ENCODE measurements at regions of chr18 and their contacts with region 1.

Region 1: GRCh38 chr18:50819728-50820378 is at the start of gene MRO:
- DNase-seq: peak; percentile 62 to 91
- H3K4me3 ChIP-seq: peak within 1 kb of the TSS in 3 of 4 experiments; percentile 24 to 54 (median 41); a peak in 5 of 8 replicates
- H3K27ac ChIP-seq: no peak within 1 kb of the TSS
- H3K4me1 ChIP-seq: peaks cover 3 to 12% (median 7%) of the 10 kb centered on the region in 4 experiments; a peak in 6 of 7 replicates
- H3K27me3 ChIP-seq: no peaks in the 10 kb centered on the region
- CTCF ChIP-seq: peak; percentile 89 to 93 (median 90)
- EP300 ChIP-seq: no peak
- POLR2A ChIP-seq: no peak
- RAD21 ChIP-seq: peak; percentile 99
- total RNA-seq, gene MRO: 0.67 and 1.0 TPM in 2 replicates

Region 2: DNA sequence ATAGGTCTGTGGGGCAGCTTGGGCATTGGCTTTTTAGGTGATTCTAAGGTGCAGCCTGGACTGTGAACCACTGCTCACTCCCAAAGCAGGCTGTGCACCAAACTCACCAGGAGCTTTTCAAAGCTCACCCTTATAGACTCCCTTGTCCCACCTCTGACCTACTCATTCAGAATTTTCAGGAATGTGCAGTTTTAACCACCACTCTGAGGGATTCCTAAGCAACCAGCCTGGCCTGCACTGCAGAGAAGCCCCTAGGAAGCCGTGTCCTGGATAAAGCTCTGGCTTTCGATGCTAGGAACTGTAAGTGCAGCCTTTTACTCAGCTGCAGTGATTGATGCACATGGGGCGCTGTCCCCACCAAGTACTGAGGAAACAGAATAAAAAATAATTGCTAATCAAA is 33.0 kb before region 1 on chr18:
- CTCF ChIA-PET with region 1: interaction called, 16 read pairs
- POLR2A ChIA-PET with region 1: no interaction called
- DNase-seq: no peak
- H3K4me3 ChIP-seq: no peak overlapping the region
- H3K27ac ChIP-seq: no peak overlapping the region
- H3K4me1 ChIP-seq: peaks cover 0 to 3% (median 0%) of the 10 kb centered on the region in 4 experiments; a peak in 1 of 7 replicates
- H3K27me3 ChIP-seq: no peaks in the 10 kb centered on the region
- CTCF ChIP-seq: no peak
- EP300 ChIP-seq: no peak
- POLR2A ChIP-seq: no peak
- RAD21 ChIP-seq: no peak

Region 3: DNA sequence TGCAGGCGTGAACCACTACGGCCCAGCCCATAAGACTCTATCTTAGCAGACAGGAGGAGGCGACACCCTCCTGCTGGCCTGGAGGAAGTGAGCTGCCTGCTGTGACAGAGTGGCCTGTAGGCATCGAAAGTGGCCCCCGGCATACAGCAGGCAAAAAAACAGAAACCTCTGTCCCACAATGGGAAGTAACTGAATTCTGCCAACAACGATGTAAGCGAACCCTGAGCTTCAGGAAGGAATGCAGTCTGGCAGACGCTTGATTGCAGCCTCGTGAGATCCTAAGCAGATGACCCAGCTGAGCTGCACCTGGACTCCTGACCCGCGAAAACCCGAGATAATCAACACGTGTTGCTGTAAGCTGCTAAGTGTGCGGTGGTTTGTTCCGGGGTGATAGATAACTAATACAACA is 13.6 kb before region 1 on chr18:
- CTCF ChIA-PET with region 1: interaction called, 11 read pairs
- POLR2A ChIA-PET with region 1: no interaction called
- DNase-seq: no peak
- H3K4me3 ChIP-seq: no peak overlapping the region
- H3K27ac ChIP-seq: no peak overlapping the region
- H3K4me1 ChIP-seq: peaks cover 0 to 3% (median under 1%) of the 10 kb centered on the region in 4 experiments; a peak in 3 of 7 replicates
- H3K27me3 ChIP-seq: no peaks in the 10 kb centered on the region
- CTCF ChIP-seq: no peak
- EP300 ChIP-seq: no peak
- POLR2A ChIP-seq: no peak
- RAD21 ChIP-seq: 0 out of 4 replicates have a peak, but pooled peaks of 1 of the 2 experiments have one; percentile 12

Region 4: DNA sequence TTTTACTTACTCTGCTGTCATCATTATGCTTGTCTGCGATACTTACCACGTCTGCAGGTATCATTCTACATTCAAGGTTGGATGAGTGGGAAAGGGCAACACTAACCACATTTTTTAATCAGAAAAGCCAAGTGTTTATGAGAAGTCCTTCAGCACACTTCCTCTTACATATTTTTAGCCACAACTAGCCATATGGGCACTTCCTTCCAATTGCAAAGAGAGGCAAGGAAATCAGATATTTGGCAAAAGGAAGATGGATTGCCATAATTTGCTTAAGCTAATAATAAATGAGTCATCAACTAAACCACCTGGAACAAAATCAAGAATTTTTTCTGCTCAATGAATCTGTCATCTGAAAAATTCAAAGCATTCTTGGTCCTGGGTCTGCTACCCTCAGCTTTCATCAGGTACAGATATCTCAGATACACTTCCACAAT is 16.7 kb after region 1 on chr18:
- CTCF ChIA-PET with region 1: interaction called, 10 read pairs
- POLR2A ChIA-PET with region 1: no interaction called
- DNase-seq: no peak
- H3K4me3 ChIP-seq: no peak overlapping the region
- H3K27ac ChIP-seq: no peak overlapping the region
- H3K4me1 ChIP-seq: no peaks in the 10 kb centered on the region
- H3K27me3 ChIP-seq: no peaks in the 10 kb centered on the region
- CTCF ChIP-seq: no peak
- EP300 ChIP-seq: no peak
- POLR2A ChIP-seq: no peak
- RAD21 ChIP-seq: no peak

Region 5: DNA sequence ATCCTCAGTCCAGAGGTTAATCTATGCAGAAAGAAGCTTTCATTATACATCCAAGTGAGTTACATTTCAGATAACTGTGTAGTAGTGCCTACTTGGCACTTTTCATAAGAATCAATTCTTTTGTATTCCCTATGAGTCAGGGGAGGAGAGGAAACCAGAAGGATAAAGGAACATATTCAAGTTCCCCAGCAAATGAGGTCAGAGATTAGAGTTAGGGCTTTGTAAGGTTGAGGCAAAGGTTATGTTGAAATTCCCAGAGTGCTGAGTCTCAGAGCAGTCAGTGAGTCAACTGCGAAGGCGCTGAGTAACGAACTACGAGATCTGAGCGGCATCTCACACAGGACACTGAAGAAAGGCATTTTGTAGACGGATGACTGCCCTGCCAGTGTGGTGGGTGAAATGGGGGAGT is 34.0 kb after region 1 on chr18:
- CTCF ChIA-PET with region 1: no interaction called
- POLR2A ChIA-PET with region 1: no interaction called
- DNase-seq: no peak
- H3K4me3 ChIP-seq: no peak overlapping the region
- H3K27ac ChIP-seq: no peak overlapping the region
- H3K4me1 ChIP-seq: no peaks in the 10 kb centered on the region
- H3K27me3 ChIP-seq: no peaks in the 10 kb centered on the region
- CTCF ChIP-seq: no peak
- EP300 ChIP-seq: no peak
- POLR2A ChIP-seq: no peak
- RAD21 ChIP-seq: no peak

Region 6: GRCh38 chr18:50917021-50917420 is 97.2 kb after region 1 on chr18:
- CTCF ChIA-PET with region 1: no interaction called
- POLR2A ChIA-PET with region 1: no interaction called
- DNase-seq: no peak
- H3K4me3 ChIP-seq: no peak overlapping the region
- H3K27ac ChIP-seq: no peak overlapping the region
- H3K4me1 ChIP-seq: no peaks in the 10 kb centered on the region
- H3K27me3 ChIP-seq: no peaks in the 10 kb centered on the region
- CTCF ChIP-seq: no peak
- EP300 ChIP-seq: no peak
- POLR2A ChIP-seq: no peak
- RAD21 ChIP-seq: no peak

Region 7: GRCh38 chr18:51051105-51051712 is 231.4 kb after region 1 on chr18:
- CTCF ChIA-PET with region 1: interaction called, 12 read pairs
- POLR2A ChIA-PET with region 1: no interaction called
- DNase-seq: no peak
- H3K4me3 ChIP-seq: no peak overlapping the region
- H3K27ac ChIP-seq: no peak overlapping the region
- H3K4me1 ChIP-seq: peaks cover 0 to 10% (median 0%) of the 10 kb centered on the region in 4 experiments; a peak in 1 of 7 replicates
- H3K27me3 ChIP-seq: no peaks in the 10 kb centered on the region
- CTCF ChIP-seq: peak in 2 of 3 experiments; percentile 70 to 78; a peak in 3 of 4 replicates
- EP300 ChIP-seq: no peak
- POLR2A ChIP-seq: no peak
- RAD21 ChIP-seq: peak; percentile 82 to 87

Measured in H1 (cell line).